AG04450 (cell line): ENCODE measurements at regions of chr5 and their contacts with region 1.

Region 1: DNA sequence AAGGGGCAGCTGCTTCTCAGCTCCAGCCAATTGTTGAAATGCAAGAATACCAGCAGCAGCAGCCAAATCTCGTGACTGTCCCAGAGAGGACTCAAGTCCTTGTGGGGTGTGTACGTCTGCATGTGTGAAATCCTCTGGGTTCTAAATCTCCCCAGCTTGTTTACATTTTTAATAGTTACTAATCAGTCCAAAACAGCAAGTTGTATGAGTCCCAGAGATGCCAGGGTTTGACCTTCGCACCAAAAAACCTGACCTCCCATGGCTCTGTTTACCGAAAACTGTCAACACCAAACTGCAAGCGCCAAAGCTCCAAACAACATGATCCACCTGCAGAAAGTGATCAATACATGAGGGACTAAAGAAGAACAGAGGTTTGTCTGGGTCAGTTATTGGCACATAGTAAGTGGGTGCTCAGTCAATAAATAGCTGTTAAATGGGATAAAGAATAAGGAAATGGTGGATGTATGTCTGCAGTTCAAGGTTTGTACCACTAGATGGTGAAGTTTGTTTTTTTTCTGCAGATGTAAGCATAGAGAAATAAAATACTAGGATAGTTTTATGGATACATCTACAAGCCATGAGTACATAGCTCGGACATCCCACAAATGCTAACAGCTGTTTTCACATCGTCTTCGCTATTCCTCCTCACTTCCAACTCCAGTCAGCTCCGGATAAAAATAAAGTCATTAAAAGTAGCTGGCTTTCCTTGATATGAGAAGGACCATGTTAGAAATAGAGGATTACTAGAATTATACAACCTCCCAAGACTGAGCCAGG is 85.3 kb upstream of the ADRB2 start:
- DNase-seq: peak; percentile 72
- H3K4me3 ChIP-seq: no peak overlapping the region
- H3K27ac ChIP-seq: no peak overlapping the region
- H3K27me3 ChIP-seq: no peaks in the 10 kb centered on the region
- CTCF ChIP-seq: peak; percentile 78

Region 2: GRCh38 chr5:148776780-148777179 is 35.6 kb after region 1 on chr5:
- CTCF ChIA-PET with region 1: interaction called, 11 read pairs
- POLR2A ChIA-PET with region 1: interaction called, 3 read pairs
- DNase-seq: peak; percentile 41
- H3K4me3 ChIP-seq: no peak overlapping the region
- H3K27ac ChIP-seq: no peak overlapping the region
- H3K27me3 ChIP-seq: no peaks in the 10 kb centered on the region
- CTCF ChIP-seq: no peak

Region 3: GRCh38 chr5:148820461-148821395 is 79.6 kb after region 1 on chr5:
- CTCF ChIA-PET with region 1: interaction called, 15 read pairs
- POLR2A ChIA-PET with region 1: no interaction called
- DNase-seq: no peak
- H3K4me3 ChIP-seq: no peak overlapping the region
- H3K27ac ChIP-seq: no peak overlapping the region
- H3K27me3 ChIP-seq: no peaks in the 10 kb centered on the region
- CTCF ChIP-seq: peak; percentile 68

Region 4: DNA sequence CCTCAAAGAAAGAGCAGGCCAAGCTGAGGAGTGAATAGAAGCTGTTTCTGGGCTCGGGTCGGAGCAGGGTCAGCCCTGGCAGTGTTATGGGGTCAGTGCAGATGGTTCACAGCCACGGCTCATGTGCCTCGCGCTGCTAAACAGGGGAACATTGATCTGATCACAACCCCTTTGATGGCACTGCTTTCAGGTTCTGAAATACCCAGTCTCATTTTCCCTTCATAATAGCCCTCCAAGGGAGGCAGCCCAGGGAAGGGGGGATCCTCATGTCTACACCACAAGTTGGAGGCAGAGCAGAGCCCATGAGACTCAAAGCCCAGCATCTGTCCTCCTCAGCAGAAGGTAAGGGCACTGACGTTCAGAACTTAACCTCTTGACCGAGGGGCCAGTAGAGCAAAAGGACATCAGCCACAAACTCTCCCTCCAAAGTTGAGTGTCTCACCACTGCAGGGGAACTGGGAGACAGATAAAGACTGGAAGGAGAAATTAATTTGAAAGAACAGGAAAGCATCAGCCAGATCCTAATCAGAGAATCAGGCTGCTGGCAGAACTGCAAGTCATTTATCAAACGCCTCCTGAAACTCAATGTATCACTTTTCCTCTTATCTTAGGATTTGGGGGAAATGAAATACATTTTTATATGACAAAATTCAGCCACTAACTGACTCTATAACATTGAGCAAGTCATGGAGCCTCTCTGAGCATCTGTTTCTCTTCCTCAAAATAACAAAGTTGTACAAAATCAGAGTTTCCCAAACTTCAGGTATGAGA is 211.1 kb after region 1 on chr5:
- CTCF ChIA-PET with region 1: interaction called, 171 read pairs
- POLR2A ChIA-PET with region 1: no interaction called
- DNase-seq: no peak
- H3K4me3 ChIP-seq: no peak overlapping the region
- H3K27ac ChIP-seq: no peak overlapping the region
- H3K27me3 ChIP-seq: no peaks in the 10 kb centered on the region
- CTCF ChIP-seq: no peak

Region 5: DNA sequence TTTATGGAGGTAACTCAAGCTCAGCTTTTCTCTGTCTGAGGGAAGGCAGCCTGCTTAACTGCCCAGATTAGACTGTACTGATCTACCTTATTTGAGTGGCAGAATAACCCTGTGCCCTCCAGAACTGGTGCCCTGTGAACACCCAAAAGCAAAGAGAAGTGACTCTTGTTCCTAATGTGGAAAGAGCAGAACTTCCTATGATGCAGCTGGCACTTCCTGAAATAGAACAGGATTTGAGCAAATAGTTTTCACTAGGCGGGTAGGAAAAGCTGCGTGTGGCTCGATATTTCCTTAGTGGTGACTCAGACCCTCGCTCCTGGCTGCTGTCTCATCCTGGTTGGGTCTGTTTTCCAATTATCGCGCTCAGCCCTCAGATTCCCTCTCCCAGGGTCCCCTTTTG is 231.8 kb after region 1 on chr5:
- CTCF ChIA-PET with region 1: interaction called, 11 read pairs
- POLR2A ChIA-PET with region 1: no interaction called
- DNase-seq: peak; percentile 53
- H3K4me3 ChIP-seq: no peak overlapping the region
- H3K27ac ChIP-seq: peak overlapping the region; percentile 77
- H3K27me3 ChIP-seq: no peaks in the 10 kb centered on the region
- CTCF ChIP-seq: 0 out of 2 replicates have a peak, but pooled peaks have one; percentile 15

Region 6: GRCh38 chr5:149005077-149005892 is 264.1 kb after region 1 on chr5:
- CTCF ChIA-PET with region 1: interaction called, 246 read pairs
- POLR2A ChIA-PET with region 1: no interaction called
- DNase-seq: no peak
- H3K4me3 ChIP-seq: no peak overlapping the region
- H3K27ac ChIP-seq: peak overlapping the region; percentile 49
- H3K27me3 ChIP-seq: no peaks in the 10 kb centered on the region
- CTCF ChIP-seq: no peak

Region 7: GRCh38 chr5:149053072-149053695 is 312.0 kb after region 1 on chr5:
- CTCF ChIA-PET with region 1: interaction called, 10 read pairs
- POLR2A ChIA-PET with region 1: no interaction called
- DNase-seq: no peak
- H3K4me3 ChIP-seq: no peak overlapping the region
- H3K27ac ChIP-seq: no peak overlapping the region
- H3K27me3 ChIP-seq: no peaks in the 10 kb centered on the region
- CTCF ChIP-seq: no peak

Region 8: GRCh38 chr5:149605998-149606724 is 865.0 kb after region 1 on chr5:
- CTCF ChIA-PET with region 1: no interaction called
- POLR2A ChIA-PET with region 1: no interaction called
- DNase-seq: no peak
- H3K4me3 ChIP-seq: no peak overlapping the region
- H3K27ac ChIP-seq: no peak overlapping the region
- H3K27me3 ChIP-seq: peaks cover under 1% of the 10 kb centered on the region
- CTCF ChIP-seq: no peak